ENCODE measurements at regions of chr14 and their contacts with region 1.

Region 1: DNA sequence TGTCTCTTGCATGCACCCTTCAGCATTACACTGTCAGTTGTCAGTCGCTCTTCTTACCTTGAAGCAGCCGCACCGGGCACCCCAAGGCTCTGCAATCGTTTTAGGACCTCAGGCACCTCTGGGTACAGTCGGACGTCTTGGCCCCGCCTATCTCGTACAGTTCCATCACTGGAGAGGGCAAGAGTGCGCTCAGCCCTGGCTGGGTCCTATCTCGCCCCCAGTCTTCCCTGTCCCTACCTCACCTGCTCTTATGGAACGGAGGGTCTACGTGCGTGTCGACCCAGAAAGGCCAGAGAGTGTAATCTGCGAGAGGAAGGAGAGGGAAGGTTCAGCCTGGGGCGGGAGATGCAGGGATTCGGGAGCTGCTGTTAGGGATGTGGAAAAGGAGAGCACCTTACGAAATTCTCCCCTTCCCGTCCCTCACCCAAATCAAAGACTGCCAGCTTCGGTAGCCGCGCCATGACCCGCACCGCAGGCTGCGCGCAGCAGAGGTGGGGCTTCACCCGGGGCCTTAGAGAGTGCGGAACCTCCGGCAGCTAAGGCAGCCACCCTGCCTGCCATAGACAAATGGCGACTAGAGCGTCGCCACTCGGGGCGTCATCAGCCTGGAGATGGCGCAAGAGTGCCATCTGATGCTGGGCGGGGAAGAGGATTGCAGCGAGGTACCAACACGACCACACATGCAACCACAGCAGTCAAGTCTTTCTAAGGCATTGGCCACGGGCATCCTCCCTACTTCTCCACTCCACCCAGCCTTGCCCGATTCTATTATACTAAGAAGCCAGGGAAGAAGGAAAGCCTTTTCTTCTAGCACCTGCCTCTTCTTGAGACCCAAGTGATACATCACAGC is at the start of gene MDP1:
- DNase-seq: peak; percentile 85 to 91
- ATAC-seq: peak; percentile 77 to 85 (median 82)
- H3K4me3 ChIP-seq: peak within 1 kb of the TSS; percentile 80
- H3K27ac ChIP-seq: peak within 1 kb of the TSS; percentile 87
- H3K4me1 ChIP-seq: peaks cover 20% of the 10 kb centered on the region
- H3K27me3 ChIP-seq: no peaks in the 10 kb centered on the region
- CTCF ChIP-seq: peak; percentile 43
- total RNA-seq, gene MDP1: 9.4 to 16.3 (median 12.1) TPM

Region 2: DNA sequence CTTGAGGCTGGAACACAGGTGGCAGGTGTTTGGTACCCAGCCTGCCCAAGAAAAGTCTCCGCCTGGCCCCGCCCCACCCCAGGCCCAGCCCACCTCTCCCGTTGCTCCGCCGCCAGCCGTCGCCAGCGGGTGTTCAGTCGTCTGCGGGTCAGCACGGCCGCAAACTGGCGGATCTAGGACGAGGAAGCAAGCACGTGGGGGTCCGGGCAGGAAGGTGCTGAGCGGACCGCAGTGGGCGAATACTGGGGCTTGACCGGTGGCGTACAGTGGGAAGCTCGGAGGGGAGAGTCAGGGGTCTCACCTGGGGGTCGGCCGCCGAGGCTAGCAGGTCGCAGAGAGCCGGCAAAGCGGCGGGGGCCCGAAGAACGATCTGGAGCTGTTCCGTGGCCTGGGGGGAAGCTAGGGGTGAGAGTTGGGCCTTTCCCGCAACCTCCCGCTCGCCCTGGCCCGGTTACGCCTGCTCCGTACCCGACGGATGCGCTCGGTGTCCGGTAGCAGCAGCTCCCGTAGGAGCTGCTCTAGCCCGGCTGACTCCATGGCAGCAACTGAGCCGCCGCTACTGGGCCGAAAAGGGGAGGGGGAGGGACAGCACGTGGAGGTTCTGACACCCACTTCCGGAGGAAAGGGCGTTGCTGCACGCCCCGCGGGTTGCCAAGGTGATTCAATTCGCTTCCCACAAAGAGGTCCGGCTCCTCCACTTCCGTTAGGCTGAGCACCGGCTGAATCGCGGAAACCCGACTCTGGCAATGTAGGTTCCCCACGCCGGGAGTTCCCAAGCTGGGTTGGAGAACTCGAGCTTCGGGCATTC is 27.3 kb before region 1 on chr14 and contains the start of gene IPO4:
- intact Hi-C with region 1: loop called in 1 of 2 experiments (anchors 2 kb)
- DNase-seq: peak; percentile 95 to 98
- ATAC-seq: peak; percentile 95 to 97 (median 96)
- H3K4me3 ChIP-seq: peak within 1 kb of the TSS; percentile 90
- H3K27ac ChIP-seq: peak within 1 kb of the TSS; percentile 94
- H3K4me1 ChIP-seq: peaks cover 21% of the 10 kb centered on the region
- H3K27me3 ChIP-seq: no peaks in the 10 kb centered on the region
- CTCF ChIP-seq: no peak
- total RNA-seq, gene IPO4: 35.7 to 75.9 (median 51.1) TPM

Measured in psoas muscle (tissue), 8 donors.